ENCODE measurements at regions of chr10 and their contacts with region 1.

Region 1: GRCh38 chr10:48656241-48656913 is 28.3 kb upstream of the WDFY4 start:
- DNase-seq: peak; percentile 76 to 93 (median 88)
- H3K4me3 ChIP-seq: peak overlapping the region; percentile 57 to 87 (median 77)
- H3K27ac ChIP-seq: peak overlapping the region in 41 of 59 donors; percentile 3 to 87 (median 71)
- H3K27me3 ChIP-seq: no peaks in the 10 kb centered on the region
- CTCF ChIP-seq: peak; percentile 73 to 100 (median 98)

Region 2: GRCh38 chr10:48444266-48444665 is 212.1 kb before region 1 on chr10:
- intact Hi-C with region 1: loop called in 1 of 2 experiments (anchors 10 kb)
- DNase-seq: peak in 2 of 10 donors; percentile 22 to 31
- H3K4me3 ChIP-seq: no peak overlapping the region
- H3K27ac ChIP-seq: no peak overlapping the region
- H3K27me3 ChIP-seq: no peaks in the 10 kb centered on the region
- CTCF ChIP-seq: peak in 31 of 56 donors; percentile 9 to 55 (median 26)

Region 3: GRCh38 chr10:48608279-48608681 is 48.1 kb before region 1 on chr10:
- intact Hi-C with region 1: loop called (anchors 2 to 5 kb)
- DNase-seq: peak in 1 of 10 donors; percentile 35
- H3K4me3 ChIP-seq: no peak overlapping the region
- H3K27ac ChIP-seq: peak overlapping the region in 3 of 59 donors; percentile 3 to 38 (median 24)
- H3K27me3 ChIP-seq: peaks cover 0 to 3% (median 0%) of the 10 kb centered on the region in 45 donors
- CTCF ChIP-seq: peak in 54 of 56 donors; percentile 18 to 71 (median 58)

Region 4: DNA sequence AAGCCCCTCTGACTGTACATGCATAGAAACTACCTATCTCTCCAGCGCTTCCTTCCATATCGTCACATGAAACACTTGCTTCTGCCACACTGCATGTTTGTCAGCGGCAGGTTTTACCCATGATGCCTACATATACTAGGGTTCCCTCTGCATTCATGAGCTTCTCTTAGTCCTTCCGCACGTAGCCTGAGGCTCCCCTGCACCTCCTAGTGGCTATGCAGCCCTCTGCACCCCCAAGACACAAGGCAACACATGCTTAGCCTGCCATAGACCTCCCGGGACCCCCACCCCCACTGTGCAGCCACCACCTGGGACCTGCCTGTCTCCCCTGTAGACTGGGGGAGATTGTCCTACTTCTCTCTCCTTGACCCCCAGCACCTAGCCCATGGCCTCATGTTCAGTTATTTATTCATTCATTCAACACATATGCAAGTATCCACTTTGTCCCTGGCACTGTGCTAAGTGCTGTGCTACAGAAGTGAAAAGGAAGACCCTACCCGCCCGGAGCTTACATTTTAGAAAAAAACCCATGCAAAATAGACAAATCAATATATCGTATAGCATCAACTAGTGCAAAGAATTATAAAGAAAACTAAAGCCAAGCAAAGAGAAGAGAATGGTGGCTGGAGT is 508.3 kb after region 1 on chr10:
- intact Hi-C with region 1: loop called in 1 of 2 experiments (anchors 10 kb)
- DNase-seq: no peak
- H3K4me3 ChIP-seq: no peak overlapping the region
- H3K27ac ChIP-seq: peak overlapping the region in 4 of 59 donors; percentile 54 to 75 (median 68)
- H3K27me3 ChIP-seq: no peaks in the 10 kb centered on the region
- CTCF ChIP-seq: peak in 52 of 56 donors; percentile 23 to 69 (median 50)